HepG2 (cell line): ENCODE measurements at regions of chr14 and their contacts with region 1.

Region 1: GRCh38 chr14:44162197-44162596 is 344.9 kb downstream of the FSCB start:
- DNase-seq: peak; percentile 33
- ATAC-seq: peak; percentile 65
- H3K4me3 ChIP-seq: no peak overlapping the region
- H3K27ac ChIP-seq: no peak overlapping the region
- H3K4me1 ChIP-seq: peaks cover 10% of the 10 kb centered on the region
- H3K27me3 ChIP-seq: no peaks in the 10 kb centered on the region
- CTCF ChIP-seq: no peak
- EP300 ChIP-seq: no peak
- POLR2A ChIP-seq: no peak
- RAD21 ChIP-seq: no peak

Region 2: DNA sequence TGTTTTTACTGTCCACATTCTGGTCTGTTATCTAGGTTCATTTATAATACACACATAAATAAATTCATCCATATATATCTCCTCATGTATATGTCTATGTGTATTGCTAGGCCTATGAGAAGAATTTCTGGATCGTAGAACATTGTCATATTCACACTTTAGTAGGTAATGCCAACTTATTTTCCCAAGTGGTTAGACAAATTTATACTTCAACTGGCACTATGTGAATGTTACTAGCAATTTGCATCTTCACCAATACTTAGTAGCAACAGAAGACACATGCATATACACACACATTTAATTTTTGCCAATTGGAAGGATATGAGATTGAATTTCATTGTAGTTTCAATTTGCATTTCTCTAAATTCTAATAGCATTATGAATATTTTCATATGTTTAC is 20.2 kb before region 1 on chr14:
- CTCF ChIA-PET with region 1: no interaction called
- POLR2A ChIA-PET with region 1: no interaction called
- in situ Hi-C with region 1: no loop called
- intact Hi-C with region 1: no loop called
- DNase-seq: no peak
- ATAC-seq: no peak
- H3K4me3 ChIP-seq: no peak overlapping the region
- H3K27ac ChIP-seq: no peak overlapping the region
- H3K4me1 ChIP-seq: no peaks in the 10 kb centered on the region
- H3K27me3 ChIP-seq: no peaks in the 10 kb centered on the region
- CTCF ChIP-seq: no peak
- EP300 ChIP-seq: no peak
- POLR2A ChIP-seq: no peak
- RAD21 ChIP-seq: no peak

Region 3: GRCh38 chr14:44854114-44854513 is 691.9 kb after region 1 on chr14:
- CTCF ChIA-PET with region 1: no interaction called
- POLR2A ChIA-PET with region 1: no interaction called
- in situ Hi-C with region 1: no loop called
- intact Hi-C with region 1: loop called (anchors 5 kb)
- DNase-seq: no peak
- ATAC-seq: 0 out of 3 replicates have a peak, but pooled peaks have one; percentile 46
- H3K4me3 ChIP-seq: no peak overlapping the region
- H3K27ac ChIP-seq: no peak overlapping the region
- H3K4me1 ChIP-seq: no peaks in the 10 kb centered on the region
- H3K27me3 ChIP-seq: no peaks in the 10 kb centered on the region
- CTCF ChIP-seq: peak; percentile 34
- EP300 ChIP-seq: no peak
- POLR2A ChIP-seq: no peak
- RAD21 ChIP-seq: no peak